ENCODE measurements at regions of chr6 and their contacts with region 1.

Region 1: GRCh38 chr6:151330134-151330696 is 61.1 kb downstream of the ZBTB2 start:
- DNase-seq: no peak
- H3K4me3 ChIP-seq: no peak overlapping the region
- H3K27ac ChIP-seq: peak overlapping the region in 2 of 4 donors; percentile 5 to 34
- H3K4me1 ChIP-seq: peaks cover 1 to 10% (median 5%) of the 10 kb centered on the region in 3 donors
- H3K27me3 ChIP-seq: peaks cover 0 to 13% (median 0%) of the 10 kb centered on the region in 4 donors
- CTCF ChIP-seq: no peak
- POLR2A ChIP-seq: no peak

Region 2: GRCh38 chr6:150891888-150892485 is 438.2 kb before region 1 on chr6:
- intact Hi-C with region 1: loop called (anchors 5 kb)
- DNase-seq: no peak
- H3K4me3 ChIP-seq: no peak overlapping the region
- H3K27ac ChIP-seq: peak overlapping the region in 1 of 4 donors; percentile 3
- H3K4me1 ChIP-seq: peaks cover 7 to 22% (median 7%) of the 10 kb centered on the region in 3 donors
- H3K27me3 ChIP-seq: no peaks in the 10 kb centered on the region
- CTCF ChIP-seq: peak; percentile 70 to 89 (median 86)
- POLR2A ChIP-seq: no peak